Activated T-helper 1 cell treated with anti-CD3 and anti-CD28 coated beads, Interleukin-12 subunit alpha, Interleukin-12 subunit beta, Interleukin-2, Interleukin-4 antibody, amounts not matched to agents 30 ng/mL and 10 ng/mL and 1 ng/mL, durations not matched to agents 14 hours and 24 hours and 36 hours (primary cell): ENCODE measurements at regions of chr11 and their contacts with region 1.

Region 1: DNA sequence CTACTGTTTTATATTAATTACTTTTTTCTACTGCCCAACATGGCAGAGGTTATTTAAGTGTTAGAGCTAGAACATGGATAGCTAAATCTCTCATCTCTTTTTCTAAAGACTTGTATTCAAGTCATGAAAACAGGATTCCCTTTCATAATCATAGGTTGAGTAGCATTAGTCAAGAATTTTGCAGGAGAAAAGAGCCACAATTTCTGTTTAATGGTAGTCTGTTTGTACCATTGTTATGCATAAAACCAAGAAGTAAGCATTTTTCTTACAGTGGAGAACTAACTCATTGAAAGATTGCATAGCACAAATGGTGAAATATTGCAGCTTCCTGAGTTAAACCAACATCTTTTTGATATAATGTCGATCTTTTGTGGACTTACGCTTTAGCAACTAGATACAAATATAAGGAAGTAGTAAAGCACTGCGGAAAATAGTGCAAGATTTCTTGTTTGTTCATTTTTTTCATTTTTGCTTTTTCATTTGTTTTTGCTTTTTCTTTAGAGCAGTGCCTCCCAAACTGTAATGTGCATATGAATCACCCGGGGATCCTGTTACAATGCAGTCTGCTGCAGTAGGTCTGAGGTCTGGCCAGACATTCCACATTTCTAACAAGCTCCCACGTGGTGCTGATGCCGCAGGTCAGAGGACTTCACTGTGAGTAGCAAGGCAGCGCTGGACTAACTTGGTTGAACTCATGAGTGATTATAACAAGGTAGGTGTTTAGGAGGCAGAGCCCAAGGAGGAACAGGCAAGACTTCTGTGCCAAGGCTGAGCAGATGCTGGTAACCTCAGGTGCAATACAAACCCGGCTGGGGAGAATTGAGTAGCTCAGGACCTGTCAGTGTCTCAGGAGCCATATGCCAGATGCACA is 4.6 kb downstream of the ETS1 start:
- DNase-seq: no peak
- H3K4me3 Mint-ChIP-seq: no peak overlapping the region
- H3K27ac Mint-ChIP-seq: peak overlapping the region; percentile 80
- H3K4me1 Mint-ChIP-seq: peaks cover 51% of the 10 kb centered on the region
- H3K27me3 Mint-ChIP-seq: peaks cover 6% of the 10 kb centered on the region

Region 2: GRCh38 chr11:128226106-128226716 is 356.5 kb before region 1 on chr11:
- intact Hi-C with region 1: loop called (anchors 1 kb)
- DNase-seq: no peak
- H3K4me3 Mint-ChIP-seq: peak overlapping the region; percentile 37
- H3K27ac Mint-ChIP-seq: peak overlapping the region; percentile 89
- H3K4me1 Mint-ChIP-seq: peaks cover 44% of the 10 kb centered on the region
- H3K27me3 Mint-ChIP-seq: no peaks in the 10 kb centered on the region

Region 3: DNA sequence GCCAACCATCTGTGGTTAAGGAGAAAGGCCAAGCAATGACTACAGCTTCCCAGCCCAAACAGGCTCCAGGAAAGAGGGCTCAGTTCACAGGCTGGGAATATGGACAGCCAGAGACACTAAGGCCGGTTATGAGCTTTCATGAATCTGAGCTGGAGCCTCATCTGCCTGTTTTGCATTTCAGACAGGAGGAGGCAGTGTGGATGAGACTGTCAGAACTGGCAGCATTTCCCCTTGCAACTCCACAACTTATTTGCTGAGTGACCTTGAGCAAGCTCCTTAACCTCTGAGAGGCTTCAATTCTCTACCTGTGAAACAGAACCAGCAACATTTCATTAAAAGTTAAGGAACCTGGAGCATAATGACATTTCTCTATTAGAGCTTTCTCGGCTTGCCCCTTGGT is 259.4 kb before region 1 on chr11:
- intact Hi-C with region 1: loop called (anchors 1 kb)
- DNase-seq: no peak
- H3K4me3 Mint-ChIP-seq: peak overlapping the region; percentile 70
- H3K27ac Mint-ChIP-seq: peak overlapping the region; percentile 95
- H3K4me1 Mint-ChIP-seq: peaks cover 91% of the 10 kb centered on the region
- H3K27me3 Mint-ChIP-seq: no peaks in the 10 kb centered on the region

Region 4: DNA sequence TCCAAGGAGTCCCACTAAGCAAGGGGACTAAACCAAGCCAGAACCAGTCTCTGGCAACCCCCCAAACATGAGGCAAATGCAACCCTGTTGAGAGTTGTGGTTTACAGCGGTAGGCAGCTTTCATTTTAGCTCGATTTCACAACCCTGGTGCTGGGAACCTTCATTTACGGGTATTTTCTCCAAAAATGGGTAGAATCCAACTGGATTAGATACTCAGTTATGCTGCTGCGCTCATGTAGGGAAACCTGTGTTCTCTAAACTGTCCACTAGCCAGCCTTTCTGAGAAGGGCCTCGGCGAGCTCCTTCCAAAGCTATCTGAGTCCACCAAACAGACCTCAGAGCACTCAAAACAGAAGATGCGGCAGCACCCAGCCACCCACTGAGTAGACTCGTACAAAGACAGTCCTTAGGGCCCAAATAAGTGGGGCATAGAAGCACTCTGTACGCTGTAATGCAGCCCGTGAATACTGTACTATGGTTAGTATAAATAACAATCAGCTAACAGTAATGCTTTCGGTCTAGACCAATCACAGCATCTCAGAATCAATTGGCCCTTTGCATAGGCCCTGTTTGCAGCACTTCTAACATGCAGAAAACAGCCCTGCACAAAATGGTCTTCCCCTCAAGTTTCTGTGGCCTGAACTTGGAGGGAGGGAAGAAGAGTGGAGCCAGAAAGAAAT is 100.1 kb before region 1 on chr11:
- intact Hi-C with region 1: no loop called
- DNase-seq: no peak
- H3K4me3 Mint-ChIP-seq: peak overlapping the region; percentile 80
- H3K27ac Mint-ChIP-seq: peak overlapping the region; percentile 95
- H3K4me1 Mint-ChIP-seq: peaks cover 96% of the 10 kb centered on the region
- H3K27me3 Mint-ChIP-seq: no peaks in the 10 kb centered on the region

Region 5: DNA sequence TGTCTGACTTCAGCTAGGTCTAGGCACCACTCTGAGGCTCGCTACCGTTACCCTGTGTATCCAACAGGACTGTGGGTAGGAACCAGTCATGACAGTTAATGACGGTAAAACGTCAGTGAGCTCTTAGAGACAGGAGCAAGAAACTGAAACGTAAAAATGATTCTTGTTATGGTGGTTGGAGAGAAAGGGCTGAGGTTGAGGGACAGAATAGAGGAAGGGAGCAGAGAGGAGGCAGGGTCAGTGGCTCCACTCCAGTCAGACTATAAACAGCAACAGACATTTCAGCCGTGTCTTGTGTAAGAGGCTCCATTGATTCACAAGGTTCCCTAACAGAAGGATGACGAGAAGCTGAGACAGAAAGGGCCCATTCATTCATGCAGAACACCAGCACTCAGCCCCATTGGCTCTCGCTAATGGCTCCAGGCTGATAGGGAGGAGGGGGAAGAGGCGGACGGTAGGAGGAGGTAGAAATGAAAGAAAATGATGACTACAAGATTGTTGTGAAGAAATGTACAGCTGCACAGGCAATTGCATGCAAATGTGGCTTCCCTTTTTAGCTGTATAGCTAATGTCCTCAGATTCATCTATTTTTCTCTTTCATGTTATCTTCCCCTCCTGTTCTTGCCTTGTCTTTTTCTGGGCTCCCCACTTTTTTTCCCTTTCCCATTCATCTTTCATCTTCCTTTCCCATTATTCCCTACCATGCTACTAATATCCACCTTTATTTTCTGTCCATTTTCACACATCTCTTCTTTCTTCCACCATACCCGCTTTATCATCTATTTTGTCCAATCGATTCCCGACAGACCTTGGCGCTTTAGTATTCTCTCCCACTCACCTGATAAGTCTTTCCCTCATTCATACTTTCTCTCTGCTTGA is 29.7 kb before region 1 on chr11:
- intact Hi-C with region 1: loop called (anchors 1 kb)
- DNase-seq: no peak
- H3K4me3 Mint-ChIP-seq: peak overlapping the region; percentile 0
- H3K27ac Mint-ChIP-seq: peak overlapping the region; percentile 53
- H3K4me1 Mint-ChIP-seq: peaks cover 60% of the 10 kb centered on the region
- H3K27me3 Mint-ChIP-seq: no peaks in the 10 kb centered on the region

Region 6: GRCh38 chr11:128599729-128600128 is 17.0 kb after region 1 on chr11:
- intact Hi-C with region 1: loop called (anchors 2 kb)
- DNase-seq: no peak
- H3K4me3 Mint-ChIP-seq: no peak overlapping the region
- H3K27ac Mint-ChIP-seq: peak overlapping the region; percentile 30
- H3K4me1 Mint-ChIP-seq: peaks cover 16% of the 10 kb centered on the region
- H3K27me3 Mint-ChIP-seq: no peaks in the 10 kb centered on the region

Region 7: DNA sequence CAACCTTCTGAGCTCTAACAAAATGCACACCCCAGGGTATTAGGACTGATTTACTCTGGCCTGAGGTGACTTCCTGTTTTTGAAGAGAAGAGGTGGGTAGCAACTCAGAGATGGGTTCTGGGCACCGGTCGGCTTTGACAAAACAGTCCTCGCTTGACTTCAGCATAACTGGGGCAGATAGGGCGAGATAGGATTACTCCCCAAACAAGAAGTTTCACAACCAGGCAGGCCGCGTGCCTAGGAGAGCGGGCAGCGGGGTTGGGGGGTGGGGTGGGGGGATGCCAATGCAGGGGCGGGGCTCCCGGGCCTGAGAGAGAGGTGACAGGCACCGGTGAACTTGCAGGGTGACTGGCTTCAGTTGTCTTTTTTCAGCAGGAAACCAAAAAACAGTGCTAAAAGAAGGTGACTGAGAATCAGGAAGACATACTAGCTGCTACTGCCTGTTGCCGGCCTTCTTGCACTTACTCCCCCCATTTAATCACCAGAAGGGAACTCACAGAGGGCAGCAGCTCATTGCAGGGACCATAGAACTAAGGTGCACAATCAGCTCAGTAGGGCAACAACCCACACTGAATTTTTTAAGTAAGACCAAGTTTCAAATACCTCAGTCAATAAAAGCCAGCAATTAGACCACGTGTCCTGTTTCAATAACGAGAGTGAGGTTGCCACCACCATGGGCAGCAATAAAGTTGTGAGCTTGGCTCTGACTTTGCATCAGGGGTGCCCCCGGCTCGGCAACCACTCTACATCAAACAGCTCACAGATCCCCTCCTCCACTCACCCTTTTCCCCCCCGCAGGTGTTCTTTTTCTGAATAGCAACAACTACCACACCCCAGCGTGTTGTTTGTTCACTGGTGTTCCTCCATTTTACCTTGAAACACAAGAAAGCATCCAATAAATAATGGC is 41.8 kb after region 1 on chr11:
- intact Hi-C with region 1: loop called (anchors 1 kb)
- DNase-seq: peak; percentile 54
- H3K4me3 Mint-ChIP-seq: peak overlapping the region; percentile 75
- H3K27ac Mint-ChIP-seq: peak overlapping the region; percentile 97
- H3K4me1 Mint-ChIP-seq: peaks cover 94% of the 10 kb centered on the region
- H3K27me3 Mint-ChIP-seq: no peaks in the 10 kb centered on the region

Region 8: GRCh38 chr11:128757235-128757711 is 174.5 kb after region 1 on chr11:
- intact Hi-C with region 1: loop called (anchors 2 kb)
- DNase-seq: peak; percentile 55
- H3K4me3 Mint-ChIP-seq: peak overlapping the region; percentile 63
- H3K27ac Mint-ChIP-seq: peak overlapping the region; percentile 95
- H3K4me1 Mint-ChIP-seq: peaks cover 68% of the 10 kb centered on the region
- H3K27me3 Mint-ChIP-seq: no peaks in the 10 kb centered on the region